Activated T-helper 2 cell treated with anti-CD3 and anti-CD28 coated beads, Interferon-gamma antibody, Interleukin-2, Interleukin-4, amounts not matched to agents 10 μg/mL and 5 μg/mL and 100 μg/mL, durations not matched to agents 14 hours and 24 hours and 36 hours (primary cell): ENCODE measurements at regions of chr2 and their contacts with region 1.

Region 1: DNA sequence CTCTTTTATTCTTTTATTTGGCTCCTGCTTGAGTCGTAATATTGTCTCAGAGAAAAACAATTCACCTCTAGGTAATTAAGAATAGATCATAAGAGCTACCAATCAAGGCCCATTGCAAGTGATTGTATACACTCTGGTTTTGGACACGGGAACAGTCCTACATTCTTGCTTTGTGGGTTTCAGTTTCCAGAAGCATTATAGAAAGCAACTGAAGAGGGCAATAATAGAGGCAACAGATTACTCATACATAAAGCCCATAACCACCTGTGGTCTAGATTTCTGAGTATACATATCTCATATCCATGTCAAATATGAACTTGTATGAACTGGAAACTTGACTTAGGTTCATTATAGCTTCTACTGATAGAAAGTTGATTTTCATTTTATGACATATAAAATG is 65.4 kb downstream of the DIS3L2 start:
- DNase-seq: no peak
- H3K4me3 Mint-ChIP-seq: no peak overlapping the region
- H3K27ac Mint-ChIP-seq: no peak overlapping the region
- H3K4me1 Mint-ChIP-seq: peaks cover 27% of the 10 kb centered on the region
- H3K27me3 Mint-ChIP-seq: peaks cover 40% of the 10 kb centered on the region

Region 2: DNA sequence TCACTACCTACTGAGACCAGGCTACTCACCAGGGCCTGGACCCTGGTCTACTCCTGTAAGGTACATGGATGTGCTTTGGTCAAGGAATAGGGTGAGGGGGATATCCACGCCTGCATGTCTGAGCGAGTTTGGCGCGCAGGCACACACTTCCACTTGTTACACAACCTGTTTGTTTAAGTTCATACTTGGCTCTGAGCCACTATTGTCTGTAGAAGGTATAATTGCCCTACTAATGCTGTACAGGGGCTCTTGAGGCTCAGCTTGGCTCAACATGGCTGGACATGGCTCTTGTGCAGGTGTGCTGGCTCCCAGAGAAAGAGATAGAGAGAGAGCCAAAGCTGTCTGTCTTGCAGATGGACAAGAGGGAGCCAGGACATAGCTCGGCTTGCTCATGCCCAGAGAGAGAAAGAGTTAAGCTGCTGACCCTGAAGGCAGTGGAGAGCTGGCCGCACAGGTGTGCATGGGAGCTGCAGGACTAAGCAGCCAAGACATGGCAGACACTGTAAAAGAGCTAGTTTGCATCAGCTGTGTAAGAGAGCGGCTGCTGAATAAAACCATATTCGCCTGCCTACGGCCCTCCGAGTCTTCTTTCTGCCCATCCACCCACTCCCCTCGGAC is 135.9 kb before region 1 on chr2:
- intact Hi-C with region 1: no loop called
- DNase-seq: no peak
- H3K4me3 Mint-ChIP-seq: no peak overlapping the region
- H3K27ac Mint-ChIP-seq: no peak overlapping the region
- H3K4me1 Mint-ChIP-seq: no peaks in the 10 kb centered on the region
- H3K27me3 Mint-ChIP-seq: peaks cover 2% of the 10 kb centered on the region

Region 3: DNA sequence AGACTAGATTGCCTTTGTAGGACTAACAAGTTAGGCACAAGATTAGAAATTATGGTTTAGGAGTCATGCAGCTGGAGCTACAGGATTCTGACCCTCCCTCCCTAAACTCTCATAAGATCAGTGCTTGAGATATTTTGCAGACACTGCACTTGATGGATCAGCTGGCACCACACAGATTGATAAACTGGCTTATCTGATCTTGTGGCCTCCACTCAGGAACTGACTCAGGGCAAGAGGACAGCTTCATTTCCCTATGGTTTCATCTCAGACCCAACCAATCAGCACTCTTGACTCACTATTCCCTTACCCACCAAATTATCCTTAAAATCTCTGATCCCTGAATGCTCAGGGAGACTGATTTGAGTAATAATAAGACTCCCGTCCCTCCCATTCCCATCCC is 86.9 kb after region 1 on chr2:
- intact Hi-C with region 1: loop called (anchors 5 kb)
- DNase-seq: peak; percentile 16
- H3K4me3 Mint-ChIP-seq: no peak overlapping the region
- H3K27ac Mint-ChIP-seq: no peak overlapping the region
- H3K4me1 Mint-ChIP-seq: peaks cover 10% of the 10 kb centered on the region
- H3K27me3 Mint-ChIP-seq: peaks cover 52% of the 10 kb centered on the region

Region 4: GRCh38 chr2:232588680-232589585 is 562.0 kb after region 1 on chr2:
- intact Hi-C with region 1: no loop called
- DNase-seq: no peak
- H3K4me3 Mint-ChIP-seq: no peak overlapping the region
- H3K27ac Mint-ChIP-seq: no peak overlapping the region
- H3K4me1 Mint-ChIP-seq: peaks cover 8% of the 10 kb centered on the region
- H3K27me3 Mint-ChIP-seq: peaks cover 2% of the 10 kb centered on the region